ENCODE measurements at regions of chr6 and their contacts with region 1.

Region 1: GRCh38 chr6:155530219-155530834 is 74.7 kb upstream of the NOX3 start:
- DNase-seq: no peak
- H3K4me3 Mint-ChIP-seq: no peak overlapping the region
- H3K27ac Mint-ChIP-seq: no peak overlapping the region
- H3K4me1 Mint-ChIP-seq: peaks cover 6% of the 10 kb centered on the region
- H3K27me3 Mint-ChIP-seq: peaks cover 1% of the 10 kb centered on the region

Region 2: GRCh38 chr6:155327326-155328073 is 202.8 kb before region 1 on chr6:
- intact Hi-C with region 1: loop called (anchors 1 kb)
- DNase-seq: peak; percentile 21
- H3K4me3 Mint-ChIP-seq: no peak overlapping the region
- H3K27ac Mint-ChIP-seq: peak overlapping the region; percentile 14
- H3K4me1 Mint-ChIP-seq: peaks cover 18% of the 10 kb centered on the region
- H3K27me3 Mint-ChIP-seq: no peaks in the 10 kb centered on the region

Region 3: GRCh38 chr6:155595284-155595683 is 65.0 kb after region 1 on chr6:
- intact Hi-C with region 1: no loop called
- DNase-seq: no peak
- H3K4me3 Mint-ChIP-seq: no peak overlapping the region
- H3K27ac Mint-ChIP-seq: no peak overlapping the region
- H3K4me1 Mint-ChIP-seq: no peaks in the 10 kb centered on the region
- H3K27me3 Mint-ChIP-seq: no peaks in the 10 kb centered on the region